RWPE1 (cell line): ENCODE measurements at regions of chr11 and their contacts with region 1.

Region 1: DNA sequence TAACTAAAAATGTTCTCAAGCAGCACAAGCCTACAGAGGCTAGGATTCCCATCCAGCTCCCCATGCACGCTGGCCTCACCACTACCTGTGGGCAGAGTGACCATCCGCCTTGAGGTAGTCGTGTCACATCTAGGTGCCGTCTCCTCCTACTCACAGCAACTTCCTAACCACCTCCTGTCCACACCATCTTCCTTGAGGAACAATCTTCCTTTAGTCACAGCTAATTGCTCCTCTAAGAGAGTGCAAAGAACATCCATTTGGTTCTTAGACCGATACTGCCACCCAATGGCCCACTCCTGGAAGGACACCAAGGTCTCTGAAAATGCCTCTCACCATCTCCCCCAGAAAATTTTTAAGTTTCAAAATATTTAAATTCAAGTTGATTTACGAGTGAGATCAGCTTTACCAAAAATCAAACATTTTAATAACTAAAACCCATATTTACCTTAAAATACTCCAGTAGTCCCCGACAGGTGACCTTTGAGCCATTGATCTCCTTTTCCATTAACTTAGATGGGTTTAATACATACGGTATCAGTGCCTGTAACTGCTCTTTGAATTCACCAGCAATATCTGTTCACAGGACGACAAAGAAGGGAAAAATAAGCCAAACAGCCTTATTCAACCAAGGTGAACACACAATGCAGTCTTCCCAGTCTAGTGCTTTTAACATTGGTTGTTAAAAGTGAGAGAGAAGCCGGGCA is 21.7 kb upstream of the PLAAT3 start:
- DNase-seq: peak; percentile 55
- H3K27ac ChIP-seq: 0 out of 2 replicates have a peak overlapping the region, but pooled peaks have one; percentile 36
- CTCF ChIP-seq: peak; percentile 68

Region 2: DNA sequence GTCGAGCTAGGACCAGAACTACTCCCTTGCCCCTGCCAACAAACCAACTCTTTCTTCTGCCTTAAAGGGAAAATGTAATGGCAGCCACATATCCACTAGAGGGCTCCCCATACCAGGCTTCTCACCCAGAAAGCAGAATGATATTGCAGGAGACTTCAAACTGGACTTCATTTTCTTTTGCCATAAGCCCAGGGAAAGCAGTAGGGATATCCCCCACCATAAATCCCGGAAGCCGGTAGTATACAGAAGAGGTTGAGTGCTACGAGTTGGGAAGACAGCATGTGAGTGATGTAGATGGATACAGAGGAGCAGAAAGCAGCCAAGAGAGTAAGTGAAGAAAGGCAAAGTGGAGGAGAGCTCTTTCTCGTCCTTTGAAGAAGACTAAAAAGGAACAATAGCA is 157.0 kb before region 1 on chr11:
- CTCF ChIA-PET with region 1: interaction called, 22 read pairs
- POLR2A ChIA-PET with region 1: no interaction called
- DNase-seq: peak; percentile 68
- H3K27ac ChIP-seq: no peak overlapping the region
- CTCF ChIP-seq: peak; percentile 92

Region 3: DNA sequence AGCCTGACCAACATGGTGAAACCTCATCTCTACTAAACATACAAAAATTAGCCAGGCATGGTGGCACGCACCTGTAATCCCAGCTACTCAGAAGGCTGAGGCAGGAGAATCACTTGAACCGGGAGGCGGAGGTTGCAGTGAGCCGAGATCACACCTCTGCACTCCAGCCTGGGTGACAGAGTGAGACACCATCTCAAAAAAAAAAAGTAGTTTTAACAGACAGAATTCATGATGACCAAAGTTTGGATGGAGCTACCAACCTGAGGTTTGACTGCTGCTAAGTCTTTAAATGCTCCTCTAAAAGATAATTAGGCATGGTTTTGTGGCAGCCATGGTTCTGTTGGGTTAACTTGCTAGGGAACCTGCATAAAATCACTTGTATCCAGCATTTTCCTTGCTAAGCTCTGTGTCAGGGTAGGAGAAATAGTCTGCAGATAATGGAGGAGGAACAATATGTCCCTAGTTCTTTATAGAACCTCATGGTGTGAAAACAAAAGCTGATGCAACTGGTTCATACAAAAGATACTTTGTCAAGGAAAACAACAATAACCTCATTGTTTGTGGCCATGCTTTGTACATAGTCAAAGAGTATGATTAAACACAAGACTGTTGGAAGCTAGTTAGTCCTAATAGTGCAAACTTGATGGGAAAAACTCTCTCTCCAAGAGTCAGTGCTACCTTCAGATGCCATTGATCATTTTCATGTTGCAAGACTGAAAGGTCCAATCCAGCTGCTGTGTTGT is 52.8 kb before region 1 on chr11:
- CTCF ChIA-PET with region 1: no interaction called
- POLR2A ChIA-PET with region 1: no interaction called
- DNase-seq: no peak
- H3K27ac ChIP-seq: no peak overlapping the region
- CTCF ChIP-seq: no peak